ENCODE measurements at regions of chrX and their contacts with region 1.

Region 1: DNA sequence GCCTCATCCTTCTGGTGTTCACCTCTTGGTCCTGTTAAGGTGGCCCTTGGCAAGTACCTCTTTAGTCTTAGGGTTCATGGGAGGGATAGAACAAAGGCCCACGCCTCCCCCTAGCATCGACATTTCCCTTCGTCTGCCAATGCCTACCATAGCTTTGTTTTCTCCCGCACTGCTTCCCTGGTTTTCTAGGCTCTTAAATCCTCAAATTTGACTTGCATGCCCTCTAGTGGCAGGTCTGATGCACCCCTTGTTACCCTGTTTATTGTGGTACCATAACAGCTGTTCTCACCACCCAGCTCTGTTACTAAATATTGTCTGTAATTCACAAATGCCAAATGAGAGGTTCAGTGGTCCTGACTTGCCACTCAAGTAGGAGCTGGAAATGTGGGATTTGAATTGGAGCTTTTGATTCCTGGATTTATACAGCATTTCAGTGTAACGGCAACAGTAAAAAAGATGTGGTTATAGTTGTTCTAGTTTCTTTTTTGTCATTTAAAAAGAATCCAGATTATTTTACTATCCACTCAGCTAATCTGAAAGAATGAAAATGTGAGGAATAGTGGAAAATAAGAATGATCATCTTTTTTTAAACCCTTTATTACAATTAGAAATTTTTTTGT is 100.1 kb downstream of the REPS2 start:
- DNase-seq: peak; percentile 75
- H3K4me3 Mint-ChIP-seq: no peak overlapping the region
- H3K27ac Mint-ChIP-seq: no peak overlapping the region
- H3K4me1 Mint-ChIP-seq: no peaks in the 10 kb centered on the region
- H3K27me3 Mint-ChIP-seq: peaks cover 3% of the 10 kb centered on the region

Region 2: DNA sequence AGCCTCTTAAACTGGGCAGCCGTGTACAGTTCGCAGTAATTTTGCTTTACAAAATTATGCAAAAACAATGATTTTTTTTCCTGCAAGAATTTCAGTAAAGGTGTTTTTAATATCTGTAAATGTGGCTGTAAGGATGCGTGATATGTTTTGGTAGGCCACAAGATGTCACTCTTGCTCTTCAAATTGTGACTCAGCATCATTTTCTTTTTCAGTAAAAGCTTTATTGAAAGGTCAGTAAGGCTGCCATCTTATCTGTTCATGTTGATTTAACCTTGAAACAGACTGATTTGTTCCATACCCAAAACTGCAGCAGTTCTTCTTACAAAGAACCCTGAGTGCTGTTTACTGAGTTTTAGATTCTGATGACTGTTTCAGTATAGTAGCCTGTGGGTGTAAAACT is 220.4 kb before region 1 on chrX:
- intact Hi-C with region 1: loop called (anchors 5 kb)
- DNase-seq: peak; percentile 59
- H3K4me3 Mint-ChIP-seq: no peak overlapping the region
- H3K27ac Mint-ChIP-seq: peak overlapping the region; percentile 15
- H3K4me1 Mint-ChIP-seq: peaks cover 13% of the 10 kb centered on the region
- H3K27me3 Mint-ChIP-seq: no peaks in the 10 kb centered on the region

Region 3: GRCh38 chrX:16882702-16883486 is 163.7 kb before region 1 on chrX:
- intact Hi-C with region 1: loop called (anchors 1 kb)
- DNase-seq: peak; percentile 86
- H3K4me3 Mint-ChIP-seq: peak overlapping the region; percentile 74
- H3K27ac Mint-ChIP-seq: no peak overlapping the region
- H3K4me1 Mint-ChIP-seq: peaks cover 2% of the 10 kb centered on the region
- H3K27me3 Mint-ChIP-seq: peaks cover 13% of the 10 kb centered on the region

Region 4: GRCh38 chrX:16993791-16994318 is 52.7 kb before region 1 on chrX:
- intact Hi-C with region 1: no loop called
- DNase-seq: no peak
- H3K4me3 Mint-ChIP-seq: no peak overlapping the region
- H3K27ac Mint-ChIP-seq: no peak overlapping the region
- H3K4me1 Mint-ChIP-seq: no peaks in the 10 kb centered on the region
- H3K27me3 Mint-ChIP-seq: peaks cover 3% of the 10 kb centered on the region

Region 5: GRCh38 chrX:17170973-17171372 is 124.4 kb after region 1 on chrX:
- intact Hi-C with region 1: no loop called
- DNase-seq: no peak
- H3K4me3 Mint-ChIP-seq: no peak overlapping the region
- H3K27ac Mint-ChIP-seq: no peak overlapping the region
- H3K4me1 Mint-ChIP-seq: no peaks in the 10 kb centered on the region
- H3K27me3 Mint-ChIP-seq: no peaks in the 10 kb centered on the region

Measured in activated CD4-positive, alpha-beta T cell treated with anti-CD3 and anti-CD28 coated beads, Interleukin-2, amount 10 ng/mL, durations not matched to agents 24 days and 14 days (primary cell).